Right ventricle myocardium inferior (tissue), 1 donor: ENCODE measurements at regions of chr19 and their contacts with region 1.

Region 1: DNA sequence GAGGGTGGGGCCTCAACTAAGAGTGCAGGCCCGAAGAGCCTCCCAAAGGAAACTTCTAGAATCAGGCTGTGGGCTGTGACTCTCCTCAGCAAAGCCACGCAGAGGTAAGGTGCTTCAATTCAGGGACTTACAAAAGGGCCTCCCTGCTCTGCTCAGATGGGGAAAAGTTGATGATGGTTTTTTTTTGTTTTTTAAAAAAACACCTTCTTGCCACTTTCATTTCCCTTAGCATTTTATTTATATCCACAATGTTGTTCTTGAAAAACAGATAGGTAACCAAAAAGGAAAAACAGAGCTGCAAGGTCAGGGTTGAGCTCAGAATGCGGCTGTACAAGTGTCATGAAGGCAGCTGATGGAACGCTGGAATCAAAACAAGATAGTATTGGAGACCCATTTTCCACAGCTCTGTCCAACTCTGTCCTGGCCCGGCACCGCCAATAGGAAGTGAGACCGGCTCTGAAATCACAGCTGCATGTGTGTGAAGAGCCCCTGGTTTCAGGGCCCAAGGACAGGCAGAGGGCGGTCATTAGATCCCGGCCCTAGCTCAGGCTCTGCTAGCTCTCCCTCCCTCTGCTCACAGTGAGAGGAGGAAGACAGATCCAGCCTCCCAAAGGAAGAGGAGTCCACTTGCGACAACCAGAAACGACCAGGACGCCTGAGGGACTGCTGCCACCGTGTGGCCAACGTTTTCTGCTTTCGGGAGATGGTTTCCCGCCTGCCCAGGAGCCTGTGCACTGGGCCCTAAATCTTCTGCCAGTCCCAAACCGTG is 58.3 kb downstream of the KLF2 start:
- DNase-seq: peak; percentile 92
- ATAC-seq: peak; percentile 88

Region 2: DNA sequence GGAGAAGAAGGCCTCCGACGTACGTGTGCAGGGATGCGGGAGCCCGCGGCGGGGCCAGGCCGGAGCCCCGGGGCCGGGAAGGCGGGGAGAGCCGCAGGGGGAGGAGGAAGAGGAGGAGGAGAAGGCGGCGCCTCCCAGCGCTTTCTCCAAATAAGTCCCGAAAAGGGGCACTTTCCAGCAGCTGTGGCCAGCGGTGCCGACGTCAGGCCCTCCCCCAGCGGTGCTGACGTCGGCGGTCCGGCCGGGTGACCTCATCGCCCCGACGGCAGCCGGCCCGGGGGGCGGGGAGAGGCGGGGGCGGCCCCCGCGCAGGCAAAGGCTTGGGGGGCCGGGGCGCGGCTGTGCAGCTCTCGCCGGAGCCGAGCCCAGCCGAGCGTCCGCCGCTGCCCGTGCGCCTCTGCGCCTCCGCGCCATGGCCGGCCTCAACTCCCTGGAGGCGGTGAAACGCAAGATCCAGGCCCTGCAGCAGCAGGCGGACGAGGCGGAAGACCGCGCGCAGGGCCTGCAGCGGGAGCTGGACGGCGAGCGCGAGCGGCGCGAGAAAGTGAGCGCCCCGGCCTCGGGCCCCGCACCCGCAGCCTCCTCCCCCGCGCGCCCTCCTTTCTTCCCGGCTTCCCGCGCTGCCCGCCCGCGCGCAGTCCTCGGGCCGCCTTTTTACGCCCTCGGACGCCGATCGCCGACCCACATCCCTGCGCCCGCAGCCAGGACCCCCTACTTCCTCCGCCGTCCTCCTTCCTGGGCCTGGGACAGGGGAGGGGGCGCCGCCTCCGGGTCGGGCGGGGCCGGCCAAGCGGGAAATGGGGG is 306.6 kb before region 1 on chr19 and contains the start of gene TPM4:
- intact Hi-C with region 1: loop called (anchors 10 kb)
- DNase-seq: peak; percentile 96
- ATAC-seq: peak; percentile 90
- total RNA-seq, gene TPM4: 106 TPM

Region 3: GRCh38 chr19:16247353-16248182 is 135.4 kb before region 1 on chr19:
- intact Hi-C with region 1: loop called (anchors 1 kb)
- DNase-seq: peak; percentile 94
- ATAC-seq: peak; percentile 97

Region 4: DNA sequence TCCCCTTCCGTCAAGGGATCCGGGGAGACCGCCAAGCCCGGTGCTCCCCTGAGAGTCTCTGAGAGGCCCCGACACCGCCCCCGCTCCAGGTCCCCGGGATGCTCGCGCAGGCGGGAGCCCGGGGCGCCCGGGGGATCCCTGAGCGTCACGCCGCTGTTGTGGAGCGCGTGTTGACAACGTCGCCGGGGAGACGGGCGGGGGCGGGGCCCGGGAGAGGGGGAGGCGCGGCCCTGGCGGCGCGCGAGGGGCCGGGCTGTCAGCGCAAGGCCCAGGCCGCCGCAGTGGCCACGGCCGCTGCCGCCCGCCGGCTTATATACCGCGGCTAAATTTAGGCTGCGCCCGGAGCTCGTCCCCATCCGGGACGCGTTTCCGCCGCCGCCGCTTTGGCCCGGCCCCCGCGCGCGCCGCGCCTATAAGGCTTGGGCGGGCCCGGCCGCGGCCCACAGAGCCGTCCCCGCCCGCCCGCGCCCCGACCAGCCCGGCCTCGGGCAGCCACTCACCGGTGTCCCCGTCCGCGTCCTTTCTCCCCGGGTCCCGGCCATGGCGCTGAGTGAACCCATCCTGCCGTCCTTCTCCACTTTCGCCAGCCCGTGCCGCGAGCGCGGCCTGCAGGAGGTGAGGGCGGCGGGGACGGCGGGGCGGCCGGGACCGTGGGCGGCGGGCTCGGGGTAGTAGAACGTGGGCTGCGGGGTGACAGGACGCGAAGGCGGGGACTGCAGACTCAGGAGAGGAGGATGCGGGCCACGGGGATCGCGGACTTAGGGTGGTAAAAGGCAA is 58.4 kb before region 1 on chr19 and contains the start of gene KLF2:
- intact Hi-C with region 1: loop called (anchors 2 kb)
- DNase-seq: peak; percentile 98
- ATAC-seq: peak; percentile 91
- total RNA-seq, gene KLF2: 73.1 TPM

Region 5: DNA sequence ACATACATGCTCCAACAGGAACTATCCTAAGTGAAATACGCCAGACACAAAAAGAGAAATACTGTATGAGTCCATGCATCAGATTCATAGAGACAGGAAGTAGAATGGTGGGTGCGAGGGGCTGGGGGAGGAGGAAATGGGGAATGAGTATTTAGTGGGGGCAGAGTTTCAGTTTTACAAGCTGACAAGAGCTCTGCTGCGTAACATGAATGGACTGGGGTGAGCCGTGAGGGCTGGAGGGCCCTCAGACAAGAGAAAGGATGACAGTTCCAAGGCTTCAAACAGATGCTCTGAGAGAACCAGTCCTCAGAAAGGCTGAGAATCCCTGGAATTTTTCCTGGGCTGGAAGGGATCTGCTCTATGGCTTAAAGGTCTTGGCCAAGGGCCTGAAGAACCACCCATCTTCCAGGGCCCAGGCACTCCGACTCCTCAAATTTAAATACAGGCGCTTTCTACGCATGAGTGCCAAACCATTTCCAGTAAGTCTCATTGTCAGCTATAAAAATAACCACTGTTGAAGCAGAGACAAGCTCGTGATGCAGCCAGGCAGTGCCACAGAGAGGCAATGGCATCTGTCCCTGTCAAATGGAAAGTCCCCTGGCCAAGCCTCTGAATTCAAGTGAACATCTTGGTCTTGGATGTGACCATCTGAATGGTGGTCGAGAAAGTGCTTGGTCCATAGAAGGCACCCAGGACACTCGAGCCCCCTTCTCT is 40.8 kb before region 1 on chr19:
- intact Hi-C with region 1: loop called (anchors 2 kb)
- DNase-seq: no peak
- ATAC-seq: peak; percentile 75

Region 6: DNA sequence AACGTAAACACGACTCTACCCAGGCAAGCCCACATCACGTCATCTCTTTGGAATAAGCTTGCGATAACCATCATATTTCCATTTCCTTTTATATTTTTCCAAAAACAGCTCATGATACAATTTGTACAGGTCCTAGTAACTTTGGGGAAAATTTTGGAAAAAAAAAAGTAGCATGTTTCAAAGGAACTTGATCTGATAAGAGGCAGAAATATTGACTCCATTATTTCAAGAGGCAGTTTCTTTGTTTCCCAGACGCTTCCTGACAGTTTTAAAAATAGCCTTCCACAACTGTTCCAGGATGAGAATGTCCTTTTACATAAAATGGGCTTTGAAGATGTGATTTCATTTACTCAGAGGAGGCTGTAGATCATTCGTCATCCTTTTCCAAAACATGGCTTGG is 35.3 kb before region 1 on chr19:
- intact Hi-C with region 1: loop called (anchors 1 kb)
- DNase-seq: no peak
- ATAC-seq: no peak

Region 7: DNA sequence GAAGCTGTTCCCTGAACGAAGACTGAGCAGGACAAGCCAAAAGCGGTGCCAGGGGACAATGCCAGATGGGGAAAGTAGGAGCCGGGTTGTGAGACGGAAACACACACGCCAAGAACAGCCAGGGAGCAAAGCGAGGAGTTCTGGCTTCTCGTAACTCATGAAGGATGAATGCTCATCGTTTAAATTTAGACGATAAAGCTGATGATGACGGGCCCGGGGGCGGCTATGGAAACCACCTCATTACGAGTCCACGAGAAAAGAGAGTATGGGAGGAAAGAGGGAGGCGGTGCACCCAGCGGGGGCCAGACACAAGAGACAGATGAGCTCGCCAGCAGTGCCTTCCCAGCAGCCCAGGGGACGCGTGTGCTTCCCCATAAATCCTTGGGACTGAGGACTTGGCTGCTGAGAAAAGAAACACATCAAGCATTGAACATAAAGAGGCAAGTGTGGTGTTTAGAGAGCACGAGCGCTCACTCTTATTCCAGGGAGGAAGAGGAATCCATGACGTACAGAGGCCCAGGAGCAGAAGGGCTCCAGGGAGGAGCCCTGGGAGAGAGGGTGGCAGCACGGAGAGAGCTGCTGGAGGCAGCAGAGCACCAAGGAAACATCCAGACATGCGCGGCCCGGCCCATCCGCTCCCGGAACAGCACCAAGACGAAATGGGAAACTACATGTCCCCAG is 18.1 kb after region 1 on chr19:
- intact Hi-C with region 1: no loop called
- DNase-seq: no peak
- ATAC-seq: no peak